ENCODE measurements at regions of chr10 and their contacts with region 1.

Region 1: DNA sequence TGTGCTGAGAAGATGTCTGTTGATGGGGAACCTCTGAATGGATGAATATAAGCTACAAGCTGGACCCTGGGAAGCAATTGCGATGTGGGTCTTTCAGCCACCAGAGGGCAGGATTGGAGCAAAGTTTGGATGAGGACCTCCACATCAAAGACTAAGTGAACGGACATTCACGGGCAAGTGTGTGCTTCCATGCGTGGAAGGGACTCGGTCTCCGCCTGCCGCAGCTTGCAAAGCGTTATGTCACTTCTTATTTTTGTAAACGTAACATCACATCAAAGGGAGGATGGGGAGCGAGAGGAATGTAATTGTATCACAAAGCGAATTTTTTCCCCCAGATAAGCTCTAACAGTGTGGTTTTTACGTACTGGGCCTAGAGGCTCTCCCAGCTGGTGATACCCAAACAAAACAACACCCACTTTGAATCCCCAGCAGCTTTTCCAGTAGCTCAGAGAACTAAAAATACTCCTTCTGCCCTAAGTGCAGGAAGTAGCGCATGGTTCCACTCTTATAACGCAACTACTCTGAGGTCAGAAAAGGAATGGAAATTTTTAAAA is 65.0 kb downstream of the VWA2 start:
- DNase-seq: peak; percentile 85
- ATAC-seq: peak; percentile 82
- H3K4me3 ChIP-seq: peak overlapping the region; percentile 24 to 41
- H3K27ac ChIP-seq: peak overlapping the region; percentile 13; the same call in 1 of the 2 replicates
- H3K4me1 ChIP-seq: peaks cover 6 to 19% of the 10 kb centered on the region in 2 experiments
- H3K27me3 ChIP-seq: peaks cover 26% of the 10 kb centered on the region; the same call in 1 of the 2 replicates
- CTCF ChIP-seq: peak; percentile 91 to 97 (median 97)
- POLR2A ChIP-seq: no peak
- RAD21 ChIP-seq: peak; percentile 100

Region 2: DNA sequence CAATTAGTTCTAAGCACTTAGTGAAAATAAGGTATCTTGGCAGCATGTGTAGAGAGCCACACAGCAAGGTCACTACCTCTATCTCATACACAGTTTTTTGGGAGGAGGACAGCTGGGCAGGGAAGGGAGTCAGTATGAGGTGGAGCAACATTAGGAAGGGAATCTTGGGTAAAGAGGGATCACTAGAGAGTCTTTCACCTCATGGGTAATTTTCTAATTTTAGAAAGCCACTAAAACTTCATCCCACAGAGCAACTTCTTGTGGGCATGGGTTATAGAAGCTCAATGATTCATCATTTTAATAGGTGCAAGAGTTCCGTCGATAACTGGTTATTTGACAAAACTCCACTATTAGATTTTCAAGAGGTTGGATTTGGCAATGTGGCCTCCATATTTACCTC is 642.8 kb before region 1 on chr10:
- CTCF ChIA-PET with region 1: no interaction called
- POLR2A ChIA-PET with region 1: no interaction called
- RAD21 ChIA-PET with region 1: no interaction called
- intact Hi-C with region 1: no loop called
- DNase-seq: no peak
- ATAC-seq: no peak
- H3K4me3 ChIP-seq: no peak overlapping the region
- H3K27ac ChIP-seq: no peak overlapping the region
- H3K4me1 ChIP-seq: peaks cover 0 to 8% of the 10 kb centered on the region in 2 experiments; a peak in 2 of 4 replicates
- H3K27me3 ChIP-seq: no peaks in the 10 kb centered on the region
- CTCF ChIP-seq: no peak
- POLR2A ChIP-seq: no peak
- RAD21 ChIP-seq: no peak

Region 3: GRCh38 chr10:114285961-114286441 is 18.1 kb before region 1 on chr10:
- CTCF ChIA-PET with region 1: interaction called, 10 read pairs
- POLR2A ChIA-PET with region 1: no interaction called
- RAD21 ChIA-PET with region 1: no interaction called
- intact Hi-C with region 1: no loop called
- DNase-seq: no peak
- ATAC-seq: no peak
- H3K4me3 ChIP-seq: no peak overlapping the region
- H3K27ac ChIP-seq: no peak overlapping the region
- H3K4me1 ChIP-seq: no peaks in the 10 kb centered on the region
- H3K27me3 ChIP-seq: no peaks in the 10 kb centered on the region
- CTCF ChIP-seq: no peak
- POLR2A ChIP-seq: no peak
- RAD21 ChIP-seq: no peak

Region 4: GRCh38 chr10:114427124-114427852 is 123.2 kb after region 1 on chr10:
- CTCF ChIA-PET with region 1: interaction called, 18 read pairs
- POLR2A ChIA-PET with region 1: no interaction called
- RAD21 ChIA-PET with region 1: interaction called in 1 of 2 experiments, 3 read pairs
- intact Hi-C with region 1: no loop called
- DNase-seq: no peak
- ATAC-seq: peak; percentile 24
- H3K4me3 ChIP-seq: no peak overlapping the region
- H3K27ac ChIP-seq: no peak overlapping the region
- H3K4me1 ChIP-seq: no peaks in the 10 kb centered on the region
- H3K27me3 ChIP-seq: no peaks in the 10 kb centered on the region
- CTCF ChIP-seq: no peak
- POLR2A ChIP-seq: no peak
- RAD21 ChIP-seq: peak; percentile 33; the same call in 1 of the 2 replicates

Region 5: DNA sequence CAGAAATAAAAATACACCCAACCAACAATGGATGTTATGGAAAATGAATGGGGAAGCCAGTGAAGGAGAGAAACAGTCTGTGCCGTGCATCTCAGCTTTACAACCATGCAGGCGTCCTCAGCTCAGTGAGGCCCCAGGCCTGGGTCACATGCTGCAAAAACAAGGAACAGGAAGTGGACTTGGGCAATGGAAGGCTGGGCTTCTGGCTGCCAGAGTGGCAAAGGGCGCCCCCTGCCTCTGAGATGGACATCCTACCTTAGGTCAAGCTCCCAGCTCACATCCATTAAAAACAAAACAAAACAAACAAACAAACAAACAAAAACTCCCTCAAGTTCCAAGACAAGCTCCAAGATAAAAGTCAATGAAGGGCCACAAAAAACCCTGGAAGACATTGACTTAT is 154.9 kb after region 1 on chr10:
- CTCF ChIA-PET with region 1: interaction called, 95 read pairs
- POLR2A ChIA-PET with region 1: no interaction called
- RAD21 ChIA-PET with region 1: interaction called, 13 to 24 read pairs
- intact Hi-C with region 1: loop called (anchors 1 kb)
- DNase-seq: peak; percentile 33
- ATAC-seq: peak; percentile 98
- H3K4me3 ChIP-seq: no peak overlapping the region
- H3K27ac ChIP-seq: no peak overlapping the region
- H3K4me1 ChIP-seq: 0 out of 4 replicates have a peak, but pooled peaks cover 0 to 5% of the 10 kb centered on the region in 2 experiments
- H3K27me3 ChIP-seq: no peaks in the 10 kb centered on the region
- CTCF ChIP-seq: peak; percentile 74 to 89 (median 83)
- POLR2A ChIP-seq: no peak
- RAD21 ChIP-seq: peak; percentile 87

Region 6: GRCh38 chr10:114526504-114527238 is 222.6 kb after region 1 on chr10:
- CTCF ChIA-PET with region 1: interaction called, 10 read pairs
- POLR2A ChIA-PET with region 1: no interaction called
- RAD21 ChIA-PET with region 1: no interaction called
- intact Hi-C with region 1: no loop called
- DNase-seq: peak; percentile 95
- ATAC-seq: peak; percentile 98
- H3K4me3 ChIP-seq: peak overlapping the region; percentile 50 to 68
- H3K27ac ChIP-seq: peak overlapping the region; percentile 63
- H3K4me1 ChIP-seq: peaks cover 28 to 36% of the 10 kb centered on the region in 2 experiments; a peak in 3 of 4 replicates
- H3K27me3 ChIP-seq: no peaks in the 10 kb centered on the region
- CTCF ChIP-seq: no peak
- POLR2A ChIP-seq: peak; percentile 98
- RAD21 ChIP-seq: no peak

Region 7: GRCh38 chr10:114876602-114877300 is 572.7 kb after region 1 on chr10:
- CTCF ChIA-PET with region 1: interaction called, 11 read pairs
- POLR2A ChIA-PET with region 1: no interaction called
- RAD21 ChIA-PET with region 1: interaction called in 1 of 2 experiments, 3 read pairs
- intact Hi-C with region 1: no loop called
- DNase-seq: peak; percentile 74
- ATAC-seq: peak; percentile 94
- H3K4me3 ChIP-seq: no peak overlapping the region
- H3K27ac ChIP-seq: no peak overlapping the region
- H3K4me1 ChIP-seq: peaks cover 0 to 13% of the 10 kb centered on the region in 2 experiments; a peak in 1 of 4 replicates
- H3K27me3 ChIP-seq: no peaks in the 10 kb centered on the region
- CTCF ChIP-seq: peak; percentile 95 to 97 (median 96)
- POLR2A ChIP-seq: no peak
- RAD21 ChIP-seq: peak; percentile 96